ENCODE measurements at regions of chr10 and their contacts with region 1.

Region 1: DNA sequence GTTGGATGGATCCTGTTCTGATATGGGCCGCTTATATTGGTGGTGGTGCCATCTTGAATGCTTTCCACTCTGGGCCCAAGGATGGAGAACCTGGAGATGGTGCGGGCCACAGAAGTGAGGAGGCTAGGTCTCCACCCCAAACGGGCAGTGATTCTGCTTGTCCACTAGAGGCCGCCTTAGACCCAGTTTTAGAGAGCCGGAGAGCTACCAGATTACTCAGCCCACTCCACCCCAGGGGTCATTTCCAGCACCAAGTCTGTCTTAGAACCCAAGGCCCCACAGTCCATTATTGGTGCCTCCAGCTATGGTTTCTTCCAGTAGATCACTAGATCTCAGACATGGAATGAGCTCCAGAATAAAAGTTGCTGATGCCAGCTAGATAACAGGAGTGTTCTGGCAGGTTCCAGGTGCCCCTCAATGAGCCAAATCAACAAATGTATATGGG is 11.8 kb upstream of the CAMK2G start:
- DNase-seq: peak; percentile 59 to 76
- H3K4me3 ChIP-seq: no peak overlapping the region
- H3K27ac ChIP-seq: peak overlapping the region; percentile 97
- H3K4me1 ChIP-seq: peaks cover 58% of the 10 kb centered on the region
- H3K27me3 ChIP-seq: no peaks in the 10 kb centered on the region
- CTCF ChIP-seq: peak; percentile 96

Region 2: GRCh38 chr10:73424516-73424915 is 461.6 kb before region 1 on chr10:
- CTCF ChIA-PET with region 1: no interaction called
- POLR2A ChIA-PET with region 1: no interaction called
- intact Hi-C with region 1: no loop called
- DNase-seq: no peak
- H3K4me3 ChIP-seq: no peak overlapping the region
- H3K27ac ChIP-seq: no peak overlapping the region
- H3K4me1 ChIP-seq: peaks cover 3% of the 10 kb centered on the region; the same call in 1 of the 2 replicates
- H3K27me3 ChIP-seq: no peaks in the 10 kb centered on the region
- CTCF ChIP-seq: no peak

Region 3: GRCh38 chr10:73908853-73909538 is 22.9 kb after region 1 on chr10:
- CTCF ChIA-PET with region 1: interaction called, 16 read pairs
- POLR2A ChIA-PET with region 1: interaction called, 43 read pairs
- intact Hi-C with region 1: loop called (anchors 1 kb)
- DNase-seq: peak; percentile 77 to 100
- H3K4me3 ChIP-seq: peak overlapping the region; percentile 85; the same call in 1 of the 2 replicates
- H3K27ac ChIP-seq: peak overlapping the region; percentile 97
- H3K4me1 ChIP-seq: peaks cover 85% of the 10 kb centered on the region
- H3K27me3 ChIP-seq: no peaks in the 10 kb centered on the region
- CTCF ChIP-seq: no peak

Region 4: GRCh38 chr10:73956476-73957359 is 70.6 kb after region 1 on chr10:
- CTCF ChIA-PET with region 1: interaction called, 5 read pairs
- POLR2A ChIA-PET with region 1: no interaction called
- intact Hi-C with region 1: loop called (anchors 1 kb)
- DNase-seq: peak; percentile 85 to 95
- H3K4me3 ChIP-seq: peak overlapping the region; percentile 15; the same call in 1 of the 2 replicates
- H3K27ac ChIP-seq: peak overlapping the region; percentile 89
- H3K4me1 ChIP-seq: peaks cover 44% of the 10 kb centered on the region
- H3K27me3 ChIP-seq: no peaks in the 10 kb centered on the region
- CTCF ChIP-seq: no peak

Region 5: GRCh38 chr10:74035303-74035702 is 149.2 kb after region 1 on chr10:
- CTCF ChIA-PET with region 1: no interaction called
- POLR2A ChIA-PET with region 1: interaction called, 7 read pairs
- intact Hi-C with region 1: loop called (anchors 1 kb)
- DNase-seq: no peak
- H3K4me3 ChIP-seq: no peak overlapping the region
- H3K27ac ChIP-seq: 0 out of 2 replicates have a peak overlapping the region, but pooled peaks have one; percentile 24
- H3K4me1 ChIP-seq: no peaks in the 10 kb centered on the region
- H3K27me3 ChIP-seq: no peaks in the 10 kb centered on the region
- CTCF ChIP-seq: peak; percentile 44

Region 6: GRCh38 chr10:74081192-74081803 is 195.2 kb after region 1 on chr10:
- CTCF ChIA-PET with region 1: interaction called, 16 read pairs
- POLR2A ChIA-PET with region 1: interaction called, 6 read pairs
- intact Hi-C with region 1: loop called (anchors 1 kb)
- DNase-seq: peak in 1 of 2 experiments; percentile 46
- H3K4me3 ChIP-seq: no peak overlapping the region
- H3K27ac ChIP-seq: peak overlapping the region; percentile 66; the same call in 1 of the 2 replicates
- H3K4me1 ChIP-seq: peaks cover 43% of the 10 kb centered on the region
- H3K27me3 ChIP-seq: no peaks in the 10 kb centered on the region
- CTCF ChIP-seq: peak; percentile 87

Measured in PC-9 (cell line).